ENCODE measurements at regions of chr19 and their contacts with region 1.

Region 1: DNA sequence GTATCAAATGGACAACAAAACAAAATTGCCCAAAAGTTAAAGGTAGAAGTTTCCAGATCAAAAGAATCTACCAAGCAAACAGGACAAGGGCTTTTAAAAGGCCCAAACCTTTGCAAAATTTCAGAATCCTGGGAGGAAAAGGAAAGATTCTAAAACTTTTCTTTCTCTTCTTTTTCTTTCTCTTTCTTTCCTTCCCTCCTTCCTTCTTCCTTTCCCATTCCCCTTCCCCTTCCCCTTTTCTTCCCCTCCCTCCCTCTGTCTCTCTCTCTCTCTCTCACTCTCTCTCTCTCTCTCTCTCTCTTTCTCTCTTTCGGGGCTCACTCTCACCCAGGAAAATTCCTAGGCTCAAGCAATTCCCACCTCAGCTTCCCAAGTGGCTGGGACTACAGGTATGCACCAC is 4.2 kb upstream of the PDCD5 start:
- DNase-seq: no peak
- ATAC-seq: no peak

Region 2: DNA sequence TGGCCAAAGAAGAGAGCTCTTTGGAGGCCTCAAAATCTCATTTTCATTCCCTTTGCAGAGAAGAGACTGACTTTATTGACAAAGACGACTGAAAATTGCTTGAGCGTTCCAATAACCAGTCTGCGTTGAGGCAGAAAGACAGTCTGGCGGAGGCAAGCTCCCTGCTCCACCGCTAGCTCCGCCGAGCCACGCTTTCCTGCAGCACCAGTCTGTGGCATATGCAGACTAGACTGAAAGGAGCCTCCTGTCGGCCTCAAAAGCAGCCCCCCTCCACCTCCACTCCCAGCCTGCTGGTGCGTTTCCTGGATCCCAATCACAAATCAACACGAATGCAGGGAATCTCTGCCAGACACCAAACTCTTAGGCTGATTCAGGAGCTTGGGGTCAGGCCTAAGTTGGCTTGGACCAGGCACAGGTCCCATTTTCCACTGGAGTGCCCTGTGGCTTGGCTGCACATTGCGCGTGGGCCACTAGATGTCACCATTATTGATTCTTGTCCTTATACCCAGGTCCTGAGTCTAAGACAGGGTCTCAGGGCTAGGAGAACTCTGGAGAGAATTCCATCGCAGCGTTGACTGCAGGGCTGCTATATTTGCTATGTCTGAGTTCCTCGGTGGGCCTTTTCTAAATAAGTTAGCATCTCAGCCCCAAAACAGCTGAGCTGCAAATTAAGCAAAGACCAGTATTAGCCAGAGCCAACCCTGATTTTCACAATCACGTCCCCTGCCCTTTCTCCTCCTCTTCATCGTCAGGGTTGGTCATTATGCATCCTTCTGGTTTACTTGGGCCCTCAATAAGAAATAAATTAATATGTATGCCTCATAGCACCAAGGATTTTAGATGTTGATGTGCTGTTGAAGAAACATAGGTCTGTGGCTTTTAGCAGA is 236.6 kb before region 1 on chr19:
- intact Hi-C with region 1: loop called in 1 of 2 experiments (anchors 5 kb)
- DNase-seq: peak; percentile 78
- ATAC-seq: peak; percentile 74 to 84

Measured in left cardiac atrium (tissue), 4 donors.